ENCODE measurements at regions of chr6 and their contacts with region 1.

Region 1: DNA sequence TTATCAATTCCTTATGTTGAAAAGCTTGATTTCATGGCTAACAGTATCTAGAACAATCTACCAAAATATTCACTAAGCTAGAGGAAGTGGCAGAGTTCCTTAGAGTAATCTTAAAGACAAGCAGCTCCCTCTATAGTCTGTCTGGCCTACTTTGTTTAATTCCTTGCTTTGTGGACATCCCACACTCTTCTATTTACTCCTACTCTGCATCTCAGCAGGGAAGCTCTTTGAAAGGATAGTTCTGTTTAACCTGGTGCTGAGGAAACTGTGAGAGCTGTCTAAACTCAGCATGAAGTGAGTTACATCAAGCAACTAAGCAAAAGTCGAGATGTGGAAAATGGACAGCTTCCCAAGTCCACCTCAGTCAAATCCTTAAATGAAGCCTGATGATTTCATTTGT is 4.3 kb downstream of the REV3L start:
- DNase-seq: peak; percentile 72
- ATAC-seq: no peak
- H3K4me3 ChIP-seq: no peak overlapping the region
- H3K4me3 Mint-ChIP-seq: no peak overlapping the region
- H3K27ac ChIP-seq: peak overlapping the region in 1 of 2 donors; percentile 70
- H3K27ac Mint-ChIP-seq: peak overlapping the region; percentile 60
- H3K4me1 ChIP-seq: peaks cover 20 to 25% of the 10 kb centered on the region in 2 donors
- H3K4me1 Mint-ChIP-seq: peaks cover 34% of the 10 kb centered on the region
- H3K27me3 ChIP-seq: no peaks in the 10 kb centered on the region
- H3K27me3 Mint-ChIP-seq: no peaks in the 10 kb centered on the region
- CTCF ChIP-seq: peak; percentile 72

Region 2: DNA sequence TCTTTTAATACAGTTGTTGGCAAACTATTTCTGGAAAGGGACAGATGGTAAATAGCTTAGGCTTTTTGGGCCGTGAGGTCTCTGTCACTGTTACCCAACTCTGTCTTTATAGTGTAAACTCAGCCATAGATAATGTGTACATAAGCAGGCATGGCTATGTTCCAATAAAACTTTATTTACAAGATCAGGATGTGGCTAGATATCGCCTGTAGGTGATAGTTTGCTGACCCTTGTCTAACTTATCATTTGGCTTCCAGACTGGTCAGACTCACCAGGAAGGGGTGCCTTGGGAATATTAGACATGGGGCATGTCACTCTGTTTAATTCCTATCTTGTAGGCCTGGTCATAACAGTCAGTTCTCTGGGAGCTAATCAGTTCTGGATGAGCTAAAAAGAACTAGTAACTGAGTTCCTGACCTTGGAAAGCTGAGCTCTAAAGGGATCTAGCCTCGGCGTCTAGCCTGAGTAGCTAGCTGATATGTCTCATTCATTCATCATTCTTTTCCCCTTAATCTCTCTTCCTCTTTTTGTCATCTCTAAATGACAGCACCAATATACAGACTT is 227.9 kb before region 1 on chr6:
- CTCF ChIA-PET with region 1: interaction called, 11 read pairs
- POLR2A ChIA-PET with region 1: no interaction called
- intact Hi-C with region 1: no loop called
- DNase-seq: no peak
- ATAC-seq: no peak
- H3K4me3 ChIP-seq: no peak overlapping the region
- H3K4me3 Mint-ChIP-seq: no peak overlapping the region
- H3K27ac ChIP-seq: no peak overlapping the region
- H3K27ac Mint-ChIP-seq: no peak overlapping the region
- H3K4me1 ChIP-seq: no peaks in the 10 kb centered on the region
- H3K4me1 Mint-ChIP-seq: no peaks in the 10 kb centered on the region
- H3K27me3 ChIP-seq: no peaks in the 10 kb centered on the region
- H3K27me3 Mint-ChIP-seq: peaks cover 10% of the 10 kb centered on the region
- CTCF ChIP-seq: no peak

Region 3: DNA sequence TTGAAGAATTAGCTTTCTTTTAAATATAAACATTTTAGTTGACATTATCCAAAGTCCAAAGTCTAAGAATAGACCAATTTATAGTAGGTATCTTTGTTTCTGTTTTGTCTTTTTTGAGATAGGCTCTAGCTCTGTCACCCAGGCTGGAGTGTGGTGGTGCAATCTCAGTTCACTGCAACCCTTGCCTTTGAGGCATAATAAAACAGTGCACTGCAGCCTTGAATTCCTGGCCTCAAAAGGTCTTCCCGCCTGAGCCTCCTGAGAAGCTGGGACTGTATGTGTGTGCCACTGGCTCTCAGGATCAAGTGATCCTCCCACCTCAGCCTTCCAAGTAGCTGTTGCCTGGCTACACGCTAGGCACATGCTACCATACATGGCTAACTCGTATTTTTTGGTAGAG is 131.2 kb before region 1 on chr6:
- CTCF ChIA-PET with region 1: interaction called, 10 read pairs
- POLR2A ChIA-PET with region 1: interaction called, 3 read pairs
- intact Hi-C with region 1: no loop called
- DNase-seq: no peak
- ATAC-seq: no peak
- H3K4me3 ChIP-seq: no peak overlapping the region
- H3K4me3 Mint-ChIP-seq: no peak overlapping the region
- H3K27ac ChIP-seq: no peak overlapping the region
- H3K27ac Mint-ChIP-seq: no peak overlapping the region
- H3K4me1 ChIP-seq: no peaks in the 10 kb centered on the region
- H3K4me1 Mint-ChIP-seq: peaks cover 2% of the 10 kb centered on the region
- H3K27me3 ChIP-seq: no peaks in the 10 kb centered on the region
- H3K27me3 Mint-ChIP-seq: no peaks in the 10 kb centered on the region
- CTCF ChIP-seq: no peak

Region 4: GRCh38 chr6:111361648-111362047 is 117.1 kb before region 1 on chr6:
- CTCF ChIA-PET with region 1: interaction called, 18 read pairs
- POLR2A ChIA-PET with region 1: no interaction called
- intact Hi-C with region 1: loop called (anchors 1 kb)
- DNase-seq: peak; percentile 36
- ATAC-seq: no peak
- H3K4me3 ChIP-seq: no peak overlapping the region
- H3K4me3 Mint-ChIP-seq: no peak overlapping the region
- H3K27ac ChIP-seq: no peak overlapping the region
- H3K27ac Mint-ChIP-seq: no peak overlapping the region
- H3K4me1 ChIP-seq: no peaks in the 10 kb centered on the region
- H3K4me1 Mint-ChIP-seq: no peaks in the 10 kb centered on the region
- H3K27me3 ChIP-seq: no peaks in the 10 kb centered on the region
- H3K27me3 Mint-ChIP-seq: no peaks in the 10 kb centered on the region
- CTCF ChIP-seq: no peak

Region 5: GRCh38 chr6:111441678-111442243 is 37.0 kb before region 1 on chr6:
- CTCF ChIA-PET with region 1: interaction called, 4 read pairs
- POLR2A ChIA-PET with region 1: no interaction called
- intact Hi-C with region 1: loop called (anchors 5 kb)
- DNase-seq: peak; percentile 81
- ATAC-seq: peak; percentile 76
- H3K4me3 ChIP-seq: peak overlapping the region in 2 of 5 experiments; percentile 5 to 13
- H3K4me3 Mint-ChIP-seq: peak overlapping the region; percentile 71
- H3K27ac ChIP-seq: peak overlapping the region in 1 of 2 donors; percentile 33
- H3K27ac Mint-ChIP-seq: peak overlapping the region; percentile 74
- H3K4me1 ChIP-seq: peaks cover 12% of the 10 kb centered on the region in 2 donors
- H3K4me1 Mint-ChIP-seq: peaks cover 27% of the 10 kb centered on the region
- H3K27me3 ChIP-seq: no peaks in the 10 kb centered on the region
- H3K27me3 Mint-ChIP-seq: no peaks in the 10 kb centered on the region
- CTCF ChIP-seq: no peak

Region 6: GRCh38 chr6:111592697-111593511 is 114.2 kb after region 1 on chr6:
- CTCF ChIA-PET with region 1: no interaction called
- POLR2A ChIA-PET with region 1: no interaction called
- intact Hi-C with region 1: no loop called
- DNase-seq: no peak
- ATAC-seq: no peak
- H3K4me3 ChIP-seq: no peak overlapping the region
- H3K4me3 Mint-ChIP-seq: no peak overlapping the region
- H3K27ac ChIP-seq: no peak overlapping the region
- H3K27ac Mint-ChIP-seq: no peak overlapping the region
- H3K4me1 ChIP-seq: peaks cover 3 to 4% of the 10 kb centered on the region in 2 donors
- H3K4me1 Mint-ChIP-seq: peaks cover 8% of the 10 kb centered on the region
- H3K27me3 ChIP-seq: no peaks in the 10 kb centered on the region
- H3K27me3 Mint-ChIP-seq: no peaks in the 10 kb centered on the region
- CTCF ChIP-seq: no peak

Region 7: GRCh38 chr6:111642463-111643158 is 163.9 kb after region 1 on chr6:
- CTCF ChIA-PET with region 1: interaction called, 10 read pairs
- POLR2A ChIA-PET with region 1: no interaction called
- intact Hi-C with region 1: no loop called
- DNase-seq: peak; percentile 60
- ATAC-seq: peak; percentile 43
- H3K4me3 ChIP-seq: no peak overlapping the region
- H3K4me3 Mint-ChIP-seq: no peak overlapping the region
- H3K27ac ChIP-seq: no peak overlapping the region
- H3K27ac Mint-ChIP-seq: no peak overlapping the region
- H3K4me1 ChIP-seq: peaks cover 0 to 5% of the 10 kb centered on the region in 2 donors
- H3K4me1 Mint-ChIP-seq: no peaks in the 10 kb centered on the region
- H3K27me3 ChIP-seq: no peaks in the 10 kb centered on the region
- H3K27me3 Mint-ChIP-seq: no peaks in the 10 kb centered on the region
- CTCF ChIP-seq: peak; percentile 35